ENCODE measurements at regions of chr3 and their contacts with region 1.

Region 1: GRCh38 chr3:36792342-36792741 is 28.0 kb upstream of the DCLK3 start:
- DNase-seq: peak; percentile 62
- H3K4me3 ChIP-seq: no peak overlapping the region
- H3K27ac ChIP-seq: no peak overlapping the region
- H3K4me1 ChIP-seq: no peaks in the 10 kb centered on the region
- H3K27me3 ChIP-seq: no peaks in the 10 kb centered on the region
- CTCF ChIP-seq: peak; percentile 61

Region 2: DNA sequence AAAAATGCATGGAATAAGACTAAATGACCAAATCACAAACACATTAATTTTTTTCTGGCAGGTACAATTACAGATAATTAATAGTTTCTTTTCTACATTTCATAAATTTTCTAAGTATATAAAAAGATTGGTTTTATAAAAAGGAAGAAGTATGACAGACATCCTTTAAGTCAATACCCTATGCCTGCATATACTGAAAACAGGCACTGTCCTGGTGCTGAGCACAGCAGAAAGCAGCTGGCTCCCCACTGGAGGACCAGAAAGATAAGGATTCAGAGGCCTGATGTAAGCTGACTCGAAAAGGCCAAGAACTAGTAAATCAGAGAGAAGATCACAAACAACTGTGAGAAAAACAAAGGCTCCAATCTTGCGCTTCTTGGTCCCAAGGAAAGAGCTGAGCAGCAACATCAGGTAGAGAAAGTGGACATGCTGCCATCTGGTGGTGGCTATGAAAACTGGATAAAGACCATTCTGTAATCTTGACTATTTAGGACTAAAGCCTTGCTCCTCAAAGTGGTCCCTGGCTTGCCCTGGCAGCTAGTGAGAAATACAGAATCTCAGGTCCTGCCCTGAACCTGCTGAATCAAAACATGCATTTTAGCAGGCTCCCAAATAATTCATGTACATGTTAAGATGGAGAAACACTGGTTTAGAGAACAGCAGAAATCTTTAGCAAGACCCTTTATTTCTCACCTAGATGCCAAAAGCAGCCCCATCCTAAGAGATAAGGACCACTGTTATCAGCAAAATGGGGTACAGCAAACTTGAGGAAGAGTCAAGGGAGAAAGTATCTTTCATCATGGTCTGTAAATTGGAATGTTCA is 76.5 kb after region 1 on chr3:
- CTCF ChIA-PET with region 1: interaction called, 6 read pairs
- POLR2A ChIA-PET with region 1: no interaction called
- intact Hi-C with region 1: loop called (anchors 2 kb)
- DNase-seq: peak; percentile 78
- H3K4me3 ChIP-seq: no peak overlapping the region
- H3K27ac ChIP-seq: no peak overlapping the region
- H3K4me1 ChIP-seq: no peaks in the 10 kb centered on the region
- H3K27me3 ChIP-seq: no peaks in the 10 kb centered on the region
- CTCF ChIP-seq: peak; percentile 84

Region 3: DNA sequence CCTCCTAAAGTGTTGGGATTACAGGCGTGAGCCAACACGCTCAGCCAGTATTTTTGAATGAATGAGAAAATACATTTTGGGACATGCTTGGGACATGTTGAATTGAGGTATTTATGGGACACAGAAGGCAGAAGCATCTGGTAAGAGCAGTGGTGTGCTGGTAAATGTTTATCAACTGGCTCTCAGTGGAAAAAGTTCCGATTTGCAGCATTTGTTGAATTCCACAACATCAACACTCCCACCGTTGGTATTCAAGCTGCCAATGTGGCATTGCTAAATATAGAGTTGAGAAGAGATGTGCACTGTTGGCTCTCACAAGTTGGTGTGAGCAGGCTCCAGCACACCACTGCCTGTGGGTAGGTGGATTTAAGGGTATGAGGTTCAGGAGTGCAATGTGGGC is 417.9 kb after region 1 on chr3:
- CTCF ChIA-PET with region 1: no interaction called
- POLR2A ChIA-PET with region 1: no interaction called
- intact Hi-C with region 1: loop called (anchors 5 kb)
- DNase-seq: no peak
- H3K4me3 ChIP-seq: no peak overlapping the region
- H3K27ac ChIP-seq: no peak overlapping the region
- H3K4me1 ChIP-seq: no peaks in the 10 kb centered on the region
- H3K27me3 ChIP-seq: no peaks in the 10 kb centered on the region
- CTCF ChIP-seq: no peak

Region 4: GRCh38 chr3:37221407-37221806 is 429.1 kb after region 1 on chr3:
- CTCF ChIA-PET with region 1: interaction called, 10 read pairs
- POLR2A ChIA-PET with region 1: no interaction called
- intact Hi-C with region 1: no loop called
- DNase-seq: peak; percentile 24
- H3K4me3 ChIP-seq: no peak overlapping the region
- H3K27ac ChIP-seq: no peak overlapping the region
- H3K4me1 ChIP-seq: peaks cover 5% of the 10 kb centered on the region
- H3K27me3 ChIP-seq: no peaks in the 10 kb centered on the region
- CTCF ChIP-seq: no peak

Region 5: GRCh38 chr3:37291275-37291700 is 498.9 kb after region 1 on chr3:
- CTCF ChIA-PET with region 1: no interaction called
- POLR2A ChIA-PET with region 1: no interaction called
- intact Hi-C with region 1: no loop called
- DNase-seq: no peak
- H3K4me3 ChIP-seq: no peak overlapping the region
- H3K27ac ChIP-seq: no peak overlapping the region
- H3K4me1 ChIP-seq: no peaks in the 10 kb centered on the region
- H3K27me3 ChIP-seq: no peaks in the 10 kb centered on the region
- CTCF ChIP-seq: no peak